ENCODE measurements at regions of chr1 and their contacts with region 1.

Region 1: GRCh38 chr1:200738740-200739498 is at the start of gene CAMSAP2:
- DNase-seq: peak; percentile 93 to 97 (median 96)
- ATAC-seq: peak; percentile 93 to 95
- H3K4me3 ChIP-seq: peak within 1 kb of the TSS; percentile 71
- H3K27ac ChIP-seq: peak within 1 kb of the TSS; percentile 98
- H3K4me1 ChIP-seq: peaks cover 2% of the 10 kb centered on the region
- H3K27me3 ChIP-seq: no peaks in the 10 kb centered on the region
- total RNA-seq, gene CAMSAP2: 33.7 to 39.5 (median 37.2) TPM

Region 2: GRCh38 chr1:199954699-199955098 is 784.2 kb before region 1 on chr1:
- intact Hi-C with region 1: no loop called
- DNase-seq: no peak
- ATAC-seq: no peak
- H3K4me3 ChIP-seq: no peak overlapping the region
- H3K27ac ChIP-seq: no peak overlapping the region
- H3K4me1 ChIP-seq: no peaks in the 10 kb centered on the region
- H3K27me3 ChIP-seq: no peaks in the 10 kb centered on the region

Region 3: GRCh38 chr1:200526709-200527612 is 212.0 kb before region 1 on chr1:
- intact Hi-C with region 1: no loop called
- DNase-seq: no peak
- ATAC-seq: no peak
- H3K4me3 ChIP-seq: no peak overlapping the region
- H3K27ac ChIP-seq: no peak overlapping the region
- H3K4me1 ChIP-seq: no peaks in the 10 kb centered on the region
- H3K27me3 ChIP-seq: no peaks in the 10 kb centered on the region

Region 4: DNA sequence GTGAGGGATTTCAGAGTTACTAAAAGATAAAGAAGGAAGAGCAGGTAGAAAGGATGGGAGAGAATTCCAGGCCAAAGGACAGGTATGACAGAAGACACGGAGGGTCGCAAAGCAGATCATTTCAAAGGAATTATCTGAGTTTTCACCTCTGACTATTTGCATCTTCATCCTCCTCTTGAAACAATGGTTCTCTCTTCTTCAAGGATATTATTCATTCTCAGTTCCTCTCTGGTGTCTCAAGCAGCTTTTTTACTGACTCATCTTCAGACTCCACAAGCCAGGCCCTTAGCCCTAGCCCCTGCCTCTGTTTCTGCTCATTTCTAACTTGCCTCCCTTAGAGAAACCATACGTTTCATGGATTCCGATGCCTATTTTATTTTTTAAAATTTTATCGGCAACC is 84.3 kb before region 1 on chr1:
- intact Hi-C with region 1: no loop called
- DNase-seq: no peak
- ATAC-seq: no peak
- H3K4me3 ChIP-seq: no peak overlapping the region
- H3K27ac ChIP-seq: no peak overlapping the region
- H3K4me1 ChIP-seq: no peaks in the 10 kb centered on the region
- H3K27me3 ChIP-seq: no peaks in the 10 kb centered on the region

Region 5: DNA sequence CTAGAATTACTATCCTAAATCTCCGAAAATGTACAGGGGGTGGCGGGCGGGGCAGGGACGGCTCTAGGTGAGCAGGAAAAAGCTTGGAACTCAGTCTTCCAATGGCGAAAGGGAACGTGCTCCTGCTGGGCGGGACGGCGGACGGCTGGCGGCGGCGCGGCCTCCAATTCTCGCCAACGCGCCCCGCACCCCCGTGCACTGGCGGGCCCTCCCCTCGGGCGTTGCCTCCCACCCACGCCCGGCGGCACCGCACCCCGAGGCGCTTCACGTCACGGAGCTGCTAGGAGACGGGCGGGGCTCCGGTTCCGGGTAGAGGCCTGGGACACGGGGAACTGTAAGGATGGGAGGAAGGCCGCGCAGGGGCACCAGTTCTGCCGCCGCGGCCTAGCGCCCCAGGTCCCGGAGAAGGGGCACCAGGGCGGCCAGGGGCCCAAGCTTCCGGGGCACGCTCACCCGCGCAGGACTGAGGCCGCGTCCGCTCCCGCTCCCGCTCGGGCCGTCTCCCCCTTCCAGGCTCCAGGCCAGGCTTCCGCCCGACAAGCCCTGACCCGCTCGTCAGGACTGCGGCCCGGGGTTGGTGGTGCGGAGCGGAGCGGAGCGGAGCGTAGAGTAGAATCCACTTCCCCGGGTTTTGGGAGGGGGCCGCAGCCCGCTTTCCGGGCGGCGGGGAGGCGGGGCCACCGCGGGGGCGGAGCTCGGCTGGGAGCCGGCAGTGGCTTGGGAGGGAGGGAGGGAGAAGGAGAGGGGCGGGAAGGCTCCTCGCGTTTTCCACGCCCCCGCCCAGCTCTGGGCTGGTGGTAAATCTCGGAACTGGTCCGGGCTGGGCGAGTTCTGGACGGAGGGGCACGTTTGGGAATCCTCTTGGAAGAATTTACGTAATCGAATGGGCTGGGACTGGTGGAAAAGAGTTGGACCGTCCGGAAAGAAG is 69.3 kb before region 1 on chr1 and contains the start of gene DDX59:
- intact Hi-C with region 1: loop called in 2 of 4 experiments (anchors 5 kb)
- DNase-seq: peak; percentile 97 to 98 (median 98)
- ATAC-seq: peak; percentile 98
- H3K4me3 ChIP-seq: peak within 1 kb of the TSS; percentile 64
- H3K27ac ChIP-seq: peak within 1 kb of the TSS; percentile 96
- H3K4me1 ChIP-seq: peaks cover 4% of the 10 kb centered on the region
- H3K27me3 ChIP-seq: no peaks in the 10 kb centered on the region
- total RNA-seq, gene DDX59: 11.0 to 14.9 (median 12.8) TPM

Region 6: DNA sequence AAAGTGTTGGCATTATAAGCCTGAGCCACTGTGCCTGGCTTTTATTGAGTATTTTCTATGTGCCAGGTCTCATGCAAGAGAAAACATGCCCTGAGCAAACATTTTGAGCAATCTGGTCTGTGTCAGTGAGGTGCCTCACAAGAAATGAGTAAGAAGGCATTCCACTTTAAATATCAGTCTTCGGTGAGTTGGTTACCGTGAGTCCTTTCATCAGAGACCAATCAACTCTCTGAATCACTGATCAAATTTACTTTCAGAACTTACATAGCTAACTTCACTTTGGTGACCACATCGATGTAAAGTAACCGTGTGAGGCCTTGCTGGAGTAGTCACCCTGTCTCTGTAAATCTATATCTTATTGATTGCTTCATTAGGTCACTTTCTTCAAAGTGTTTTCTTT is 54.9 kb before region 1 on chr1:
- intact Hi-C with region 1: loop called in 1 of 4 experiments (anchors 10 kb)
- DNase-seq: no peak
- ATAC-seq: no peak
- H3K4me3 ChIP-seq: no peak overlapping the region
- H3K27ac ChIP-seq: no peak overlapping the region
- H3K4me1 ChIP-seq: no peaks in the 10 kb centered on the region
- H3K27me3 ChIP-seq: no peaks in the 10 kb centered on the region

Measured in right cardiac atrium (tissue), 5 donors.